AG04449 (cell line): ENCODE measurements at regions of chr1 and their contacts with region 1.

Region 1: GRCh38 chr1:20151906-20152598 is 12.9 kb downstream of the PLA2G2F start:
- DNase-seq: no peak
- H3K4me3 ChIP-seq: peak overlapping the region; percentile 52
- CTCF ChIP-seq: peak; percentile 94

Region 2: DNA sequence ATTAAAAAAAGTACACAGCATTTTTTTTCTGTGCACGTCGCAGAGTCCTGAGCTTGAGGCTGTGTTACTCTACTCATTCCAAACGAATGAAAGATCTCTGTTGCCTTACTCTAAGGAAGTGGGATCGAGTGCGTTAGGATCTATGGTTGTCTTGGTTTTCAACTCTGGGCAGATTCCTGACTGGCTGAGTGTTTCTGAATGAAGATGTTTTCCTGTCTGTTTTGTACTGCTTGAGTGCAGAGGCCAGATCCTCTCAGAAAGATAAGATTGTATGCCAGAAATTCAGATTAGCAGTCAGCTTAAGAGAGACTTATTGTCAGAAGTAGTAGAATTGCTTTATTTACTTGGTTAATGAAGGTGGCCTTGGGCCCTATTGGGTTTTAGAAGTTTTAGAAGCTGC is 242.7 kb before region 1 on chr1:
- CTCF ChIA-PET with region 1: interaction called, 35 read pairs
- POLR2A ChIA-PET with region 1: no interaction called
- DNase-seq: no peak
- H3K4me3 ChIP-seq: no peak overlapping the region
- CTCF ChIP-seq: no peak

Region 3: GRCh38 chr1:19974822-19975416 is 177.1 kb before region 1 on chr1:
- CTCF ChIA-PET with region 1: interaction called, 115 read pairs
- POLR2A ChIA-PET with region 1: interaction called, 3 read pairs
- DNase-seq: peak; percentile 28
- H3K4me3 ChIP-seq: no peak overlapping the region
- CTCF ChIP-seq: peak; percentile 91

Region 4: GRCh38 chr1:20100632-20101355 is 51.3 kb before region 1 on chr1:
- CTCF ChIA-PET with region 1: interaction called, 36 read pairs
- POLR2A ChIA-PET with region 1: no interaction called
- DNase-seq: no peak
- H3K4me3 ChIP-seq: no peak overlapping the region
- CTCF ChIP-seq: peak; percentile 61

Region 5: GRCh38 chr1:20174937-20175666 is 23.1 kb after region 1 on chr1:
- CTCF ChIA-PET with region 1: interaction called, 16 read pairs
- POLR2A ChIA-PET with region 1: no interaction called
- DNase-seq: no peak
- H3K4me3 ChIP-seq: no peak overlapping the region
- CTCF ChIP-seq: no peak

Region 6: DNA sequence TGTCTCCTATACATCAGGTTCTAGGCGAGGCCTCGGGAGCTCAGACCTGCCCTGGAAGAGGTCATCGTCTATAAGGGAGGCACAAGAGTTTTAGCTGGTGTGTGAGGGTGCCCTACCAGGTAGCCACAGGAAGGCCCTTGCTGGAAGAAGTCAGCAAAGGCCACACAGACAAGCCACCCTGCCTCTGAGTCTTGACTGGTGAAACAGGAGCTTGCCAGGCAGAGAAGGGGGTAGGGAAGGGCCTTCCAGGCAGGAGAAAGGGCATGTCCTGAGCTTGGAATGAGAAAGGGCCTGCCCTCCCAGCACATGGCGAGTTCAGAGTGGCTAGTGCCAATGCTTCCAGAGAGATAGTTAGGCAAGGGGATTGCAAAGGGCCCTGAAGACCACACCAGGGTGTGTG is 53.1 kb after region 1 on chr1:
- CTCF ChIA-PET with region 1: no interaction called
- POLR2A ChIA-PET with region 1: no interaction called
- DNase-seq: no peak
- H3K4me3 ChIP-seq: no peak overlapping the region
- CTCF ChIP-seq: no peak

Region 7: DNA sequence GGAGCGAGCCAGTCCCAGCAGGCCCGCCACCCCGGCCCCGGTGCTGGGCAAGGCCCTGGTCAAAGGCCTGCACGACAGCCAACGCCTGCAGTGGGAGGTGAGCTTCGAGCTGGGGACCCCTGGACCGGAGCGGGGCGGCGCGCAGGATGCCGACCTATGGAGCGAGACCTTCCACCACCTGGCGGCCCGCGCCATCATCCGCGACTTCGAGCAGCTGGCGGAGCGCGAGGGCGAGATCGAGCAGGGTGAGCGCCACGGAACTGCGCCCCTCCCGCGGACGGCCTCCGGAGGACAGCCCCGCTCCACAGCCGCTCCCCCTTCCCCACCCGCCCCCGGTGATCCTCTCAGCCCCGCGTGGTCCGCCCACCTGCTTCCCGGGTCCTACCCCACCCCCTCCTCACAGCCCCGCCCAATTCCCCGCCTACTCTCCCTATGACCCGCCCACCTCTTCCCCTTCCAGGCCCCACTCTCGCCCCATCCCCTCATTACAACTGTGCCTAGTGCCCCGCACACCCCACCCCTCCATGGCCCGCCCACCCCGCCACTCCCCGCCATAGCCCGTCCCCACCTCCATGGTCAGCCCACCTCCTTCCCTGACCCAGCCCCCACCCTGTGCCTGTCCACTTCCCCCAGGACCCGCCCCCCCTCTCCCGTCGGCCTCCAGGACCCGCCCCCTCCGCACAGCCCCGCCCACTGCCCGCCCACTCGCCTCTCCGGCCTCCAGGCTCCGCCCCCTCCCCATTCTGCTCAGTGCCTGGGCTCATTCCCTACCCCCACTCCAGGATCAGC is 191.3 kb after region 1 on chr1:
- CTCF ChIA-PET with region 1: no interaction called
- POLR2A ChIA-PET with region 1: no interaction called
- DNase-seq: no peak
- H3K4me3 ChIP-seq: no peak overlapping the region
- CTCF ChIP-seq: no peak